Endothelial cell of umbilical vein (primary cell): ENCODE measurements at regions of chr7 and their contacts with region 1.

Region 1: DNA sequence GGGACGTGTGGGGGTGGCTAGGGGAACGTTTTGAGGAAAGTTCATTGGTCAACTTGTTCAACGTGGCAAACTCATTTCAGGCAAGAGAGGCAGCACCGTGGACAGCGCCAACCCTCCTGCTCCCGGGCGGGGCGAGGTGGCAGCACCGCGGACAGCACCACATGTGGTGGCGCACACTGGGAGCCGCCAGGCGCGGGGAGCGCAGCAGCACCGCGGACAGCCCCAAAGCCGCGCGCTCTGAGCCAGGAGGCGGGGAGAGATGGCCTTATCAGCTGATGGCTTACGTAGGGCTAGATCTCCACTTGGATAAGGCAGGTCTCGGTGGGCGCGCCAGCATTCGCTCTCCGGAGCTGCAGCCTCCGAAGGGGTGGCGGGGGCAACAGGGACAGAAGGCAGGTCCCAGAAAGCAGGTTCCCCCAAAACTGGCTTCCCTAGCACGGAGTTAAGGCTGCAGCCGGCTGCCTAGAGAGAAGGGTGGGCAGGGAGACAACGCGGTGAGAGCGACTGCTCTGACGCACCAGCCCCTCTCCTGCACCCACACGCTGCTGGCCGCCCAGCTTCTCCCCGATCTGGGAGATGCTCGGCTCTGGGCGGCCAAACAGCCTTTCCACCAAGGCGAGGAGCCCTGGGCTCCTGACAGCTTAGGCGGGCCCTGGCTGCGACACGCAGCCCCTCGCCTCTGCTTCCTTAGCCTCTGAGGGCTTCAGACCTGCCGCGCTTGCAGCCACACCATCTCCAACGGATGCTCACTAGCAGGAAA is at the start of gene HTR5A:
- DNase-seq: peak; percentile 85
- H3K4me3 ChIP-seq: no peak within 1 kb of the TSS
- H3K27ac ChIP-seq: no peak within 1 kb of the TSS
- H3K4me1 ChIP-seq: no peaks in the 10 kb centered on the region
- H3K27me3 ChIP-seq: no peaks in the 10 kb centered on the region
- CTCF ChIP-seq: no peak
- POLR2A ChIP-seq: no peak
- total RNA-seq, gene HTR5A: not detected in 2 replicates

Region 2: GRCh38 chr7:155166673-155167370 is 96.7 kb after region 1 on chr7:
- CTCF ChIA-PET with region 1: no interaction called
- POLR2A ChIA-PET with region 1: no interaction called
- dilution Hi-C with region 1: no loop called
- intact Hi-C with region 1: loop called (anchors 2 kb)
- DNase-seq: peak; percentile 84
- H3K4me3 ChIP-seq: no peak overlapping the region
- H3K27ac ChIP-seq: no peak overlapping the region
- H3K4me1 ChIP-seq: no peaks in the 10 kb centered on the region
- H3K27me3 ChIP-seq: no peaks in the 10 kb centered on the region
- CTCF ChIP-seq: no peak
- POLR2A ChIP-seq: no peak

Region 3: DNA sequence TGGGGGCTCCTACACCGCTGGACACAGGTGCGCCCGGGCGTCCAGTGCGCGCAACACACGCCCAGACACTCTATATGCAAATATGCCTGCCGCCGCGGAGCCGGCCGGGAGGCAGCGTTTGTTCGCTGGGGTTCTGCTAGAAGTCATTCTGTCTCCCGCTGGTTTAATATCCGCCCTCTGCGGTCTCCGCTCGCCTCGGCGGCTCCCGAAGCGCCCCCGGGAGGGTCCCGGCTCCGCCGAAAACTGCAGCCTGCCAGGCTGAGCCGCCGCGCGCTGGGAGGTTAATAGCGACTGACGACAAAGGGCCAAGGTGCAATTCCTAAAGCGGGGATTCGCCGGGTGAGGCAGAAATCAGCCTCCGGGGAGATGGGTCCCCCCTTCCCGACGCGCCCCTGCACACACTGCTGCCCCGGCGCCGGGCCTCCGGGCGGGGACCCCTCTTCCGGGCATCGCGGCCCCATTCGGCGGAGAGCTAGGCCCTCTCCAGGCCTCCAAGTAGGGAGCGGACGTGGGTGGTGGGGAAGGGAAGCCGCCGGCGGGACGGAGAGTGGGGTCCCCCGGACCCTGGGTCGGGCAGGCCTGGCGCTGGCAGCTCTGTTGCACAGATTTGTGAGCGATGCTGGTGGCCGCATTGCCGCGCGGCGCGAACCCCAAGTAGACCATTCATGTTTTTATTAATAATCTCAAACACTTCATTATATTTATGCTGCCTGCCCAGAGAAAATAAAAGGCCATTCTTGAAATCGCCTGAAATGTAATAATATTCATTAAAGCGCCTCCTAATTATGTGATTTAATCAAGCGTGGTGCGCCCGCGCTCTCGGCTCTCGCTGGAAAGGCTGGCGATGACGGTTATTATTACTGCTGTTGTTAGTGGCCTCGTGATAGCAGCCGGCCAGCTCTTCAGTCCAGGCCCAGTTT is 396.9 kb after region 1 on chr7:
- CTCF ChIA-PET with region 1: no interaction called
- POLR2A ChIA-PET with region 1: no interaction called
- dilution Hi-C with region 1: no loop called
- intact Hi-C with region 1: no loop called
- DNase-seq: no peak
- H3K4me3 ChIP-seq: no peak overlapping the region
- H3K27ac ChIP-seq: no peak overlapping the region
- H3K4me1 ChIP-seq: no peaks in the 10 kb centered on the region
- H3K27me3 ChIP-seq: peaks cover 83 to 100% of the 10 kb centered on the region in 2 experiments
- CTCF ChIP-seq: peak in 1 of 2 donors; percentile 29
- POLR2A ChIP-seq: no peak